H1 (cell line): ENCODE measurements at regions of chr2 and their contacts with region 1.

Region 1: GRCh38 chr2:201860636-201861066 is 54.3 kb downstream of the CDK15 start:
- DNase-seq: peak in 1 of 2 experiments; percentile 17
- H3K4me3 ChIP-seq: no peak overlapping the region
- H3K27ac ChIP-seq: no peak overlapping the region
- H3K4me1 ChIP-seq: peaks cover 3 to 27% (median 15%) of the 10 kb centered on the region in 4 experiments; a peak in 5 of 7 replicates
- H3K27me3 ChIP-seq: no peaks in the 10 kb centered on the region; a peak in 1 of 7 replicates
- CTCF ChIP-seq: peak; percentile 49 to 96 (median 83)
- EP300 ChIP-seq: no peak
- POLR2A ChIP-seq: no peak
- RAD21 ChIP-seq: peak; percentile 96 to 97

Region 2: DNA sequence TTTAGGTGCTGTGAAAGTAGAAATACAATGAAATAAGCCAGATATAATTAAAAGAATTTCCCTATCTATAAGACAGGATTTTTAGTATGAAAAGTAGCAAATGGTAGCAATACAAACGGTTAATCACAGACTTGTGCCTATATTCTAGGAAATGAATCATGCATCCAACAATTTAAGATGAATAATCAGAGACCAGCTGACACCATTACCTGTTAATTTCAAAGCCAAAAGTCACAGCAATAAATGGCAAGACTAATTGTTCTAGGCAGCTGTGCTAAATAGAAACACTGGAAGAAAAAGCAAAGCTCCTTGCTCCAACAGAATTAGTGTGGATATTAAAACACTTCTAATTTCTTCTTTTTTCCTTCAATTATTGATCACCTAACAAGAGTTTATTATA is 127.1 kb before region 1 on chr2:
- CTCF ChIA-PET with region 1: no interaction called
- POLR2A ChIA-PET with region 1: no interaction called
- DNase-seq: no peak
- H3K4me3 ChIP-seq: no peak overlapping the region
- H3K27ac ChIP-seq: no peak overlapping the region
- H3K4me1 ChIP-seq: no peaks in the 10 kb centered on the region
- H3K27me3 ChIP-seq: no peaks in the 10 kb centered on the region
- CTCF ChIP-seq: no peak
- EP300 ChIP-seq: no peak
- POLR2A ChIP-seq: no peak
- RAD21 ChIP-seq: no peak

Region 3: DNA sequence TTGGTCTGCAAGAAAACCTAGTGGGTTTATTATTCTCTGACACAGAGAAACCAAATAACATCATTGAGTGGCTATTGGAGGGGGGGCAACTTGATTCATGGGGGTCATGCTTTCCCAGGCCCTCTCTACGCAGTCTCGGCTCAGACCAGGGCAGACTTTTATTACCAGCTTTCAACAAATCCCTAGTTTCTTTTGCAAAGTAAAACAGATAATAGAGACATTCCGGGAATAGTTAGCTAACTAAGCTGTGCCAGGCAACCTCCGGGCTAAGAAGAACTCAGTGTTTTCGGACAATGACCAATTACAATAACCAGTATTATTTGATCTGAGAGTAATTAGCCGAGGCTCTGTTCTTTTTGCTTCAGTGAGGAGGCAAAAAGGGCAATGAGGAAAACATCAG is 11.9 kb after region 1 on chr2:
- CTCF ChIA-PET with region 1: interaction called, 19 read pairs
- POLR2A ChIA-PET with region 1: no interaction called
- DNase-seq: no peak
- H3K4me3 ChIP-seq: no peak overlapping the region
- H3K27ac ChIP-seq: no peak overlapping the region
- H3K4me1 ChIP-seq: peaks cover 0 to 5% (median 2%) of the 10 kb centered on the region in 4 experiments; a peak in 3 of 7 replicates
- H3K27me3 ChIP-seq: no peaks in the 10 kb centered on the region; a peak in 1 of 7 replicates
- CTCF ChIP-seq: no peak
- EP300 ChIP-seq: no peak
- POLR2A ChIP-seq: no peak
- RAD21 ChIP-seq: no peak

Region 4: GRCh38 chr2:201891676-201892075 is 31.0 kb after region 1 on chr2:
- CTCF ChIA-PET with region 1: interaction called, 21 read pairs
- POLR2A ChIA-PET with region 1: interaction called, 3 read pairs
- DNase-seq: no peak
- H3K4me3 ChIP-seq: no peak overlapping the region
- H3K27ac ChIP-seq: no peak overlapping the region
- H3K4me1 ChIP-seq: peaks cover 0 to 9% (median 5%) of the 10 kb centered on the region in 4 experiments; a peak in 2 of 7 replicates
- H3K27me3 ChIP-seq: no peaks in the 10 kb centered on the region
- CTCF ChIP-seq: no peak
- EP300 ChIP-seq: no peak
- POLR2A ChIP-seq: no peak
- RAD21 ChIP-seq: no peak

Region 5: DNA sequence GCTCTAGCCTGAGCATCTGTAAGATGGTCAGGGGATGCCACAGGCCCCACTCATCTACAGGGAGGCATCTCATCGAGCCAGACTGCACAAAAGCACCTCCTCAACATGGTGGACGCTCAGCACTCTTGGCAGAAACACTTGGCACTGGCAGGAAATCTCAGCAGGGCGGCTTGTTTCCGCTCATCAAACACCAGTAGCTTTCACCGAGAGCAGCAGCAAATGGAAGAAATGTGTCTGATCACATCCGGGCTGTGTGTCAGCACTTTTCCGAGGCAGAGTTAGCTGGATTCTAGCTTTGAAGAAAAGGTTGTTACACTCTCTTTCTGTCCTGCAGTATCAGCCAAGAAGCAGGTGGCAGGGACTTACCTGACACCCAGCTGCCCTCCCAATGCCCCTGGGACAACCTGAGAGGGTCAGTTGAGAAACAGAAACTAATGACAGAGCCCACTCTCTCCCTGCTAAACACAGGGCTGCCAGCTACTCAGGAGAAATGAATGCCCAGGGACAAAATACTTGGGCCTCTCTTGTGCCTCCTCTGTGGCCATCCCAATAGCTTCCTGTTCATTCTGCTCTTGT is 104.1 kb after region 1 on chr2:
- CTCF ChIA-PET with region 1: interaction called, 15 read pairs
- POLR2A ChIA-PET with region 1: no interaction called
- DNase-seq: no peak
- H3K4me3 ChIP-seq: no peak overlapping the region
- H3K27ac ChIP-seq: no peak overlapping the region
- H3K4me1 ChIP-seq: peaks cover 0 to 23% (median 18%) of the 10 kb centered on the region in 4 experiments; a peak in 6 of 7 replicates
- H3K27me3 ChIP-seq: no peaks in the 10 kb centered on the region
- CTCF ChIP-seq: no peak
- EP300 ChIP-seq: no peak
- POLR2A ChIP-seq: no peak
- RAD21 ChIP-seq: no peak

Region 6: GRCh38 chr2:201996006-201996405 is 135.4 kb after region 1 on chr2:
- CTCF ChIA-PET with region 1: interaction called, 11 read pairs
- POLR2A ChIA-PET with region 1: no interaction called
- DNase-seq: peak; percentile 79 to 94
- H3K4me3 ChIP-seq: peak overlapping the region in 1 of 4 experiments; percentile 26; a peak in 1 of 8 replicates
- H3K27ac ChIP-seq: peak overlapping the region; percentile 58
- H3K4me1 ChIP-seq: peaks cover 9 to 24% (median 22%) of the 10 kb centered on the region in 4 experiments
- H3K27me3 ChIP-seq: no peaks in the 10 kb centered on the region; a peak in 1 of 7 replicates
- CTCF ChIP-seq: no peak
- EP300 ChIP-seq: peak; percentile 52 to 95; a peak in 2 of 3 replicates
- POLR2A ChIP-seq: no peak
- RAD21 ChIP-seq: peak in 1 of 2 experiments; percentile 9; a peak in 1 of 4 replicates

Region 7: DNA sequence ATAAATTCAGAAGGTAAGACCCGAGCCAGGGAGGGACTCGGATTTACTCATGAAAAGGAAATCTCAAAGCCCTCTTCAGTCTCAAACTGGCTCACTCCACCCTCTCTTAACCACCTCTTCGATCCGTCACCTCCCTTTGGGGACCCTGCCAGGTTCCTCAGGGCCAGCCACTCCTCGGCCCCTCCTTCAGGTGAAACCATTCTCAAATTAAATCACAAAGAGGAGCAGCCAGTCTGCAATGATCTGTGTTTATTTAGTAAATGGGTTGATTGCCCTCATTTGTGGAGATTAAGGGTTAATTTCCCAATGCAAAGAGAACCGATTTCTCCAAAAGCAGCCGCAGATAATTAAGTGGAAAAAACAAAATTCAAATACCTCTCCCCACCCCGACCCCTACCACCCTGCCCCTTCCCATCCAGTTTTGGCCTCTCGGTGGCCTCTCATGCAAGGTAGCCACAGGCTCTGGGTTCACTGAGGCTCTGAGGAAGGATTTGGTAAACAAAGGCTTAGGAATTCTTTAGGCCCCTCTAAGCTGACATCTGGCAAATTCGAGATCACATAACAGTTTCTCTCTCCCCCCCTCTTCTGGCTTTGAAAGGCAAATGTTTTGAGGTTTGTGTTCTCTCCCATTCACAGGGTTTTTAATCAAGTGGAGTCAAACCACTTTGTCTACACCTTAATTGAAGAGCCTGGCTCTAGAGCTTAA is 162.7 kb after region 1 on chr2:
- CTCF ChIA-PET with region 1: interaction called, 13 read pairs
- POLR2A ChIA-PET with region 1: interaction called, 4 read pairs
- DNase-seq: peak; percentile 71 to 84
- H3K4me3 ChIP-seq: peak overlapping the region in 1 of 4 experiments; percentile 44; a peak in 2 of 8 replicates
- H3K27ac ChIP-seq: peak overlapping the region; percentile 66; the same call in 1 of the 2 replicates
- H3K4me1 ChIP-seq: peaks cover 13 to 28% (median 25%) of the 10 kb centered on the region in 4 experiments
- H3K27me3 ChIP-seq: peaks cover 0 to 3% (median 0%) of the 10 kb centered on the region in 4 experiments; a peak in 3 of 7 replicates
- CTCF ChIP-seq: peak in 2 of 3 experiments; percentile 2 to 16; a peak in 1 of 4 replicates
- EP300 ChIP-seq: peak in 1 of 2 experiments; percentile 64; a peak in 1 of 3 replicates
- POLR2A ChIP-seq: no peak
- RAD21 ChIP-seq: peak; percentile 9 to 35; a peak in 2 of 4 replicates

Region 8: DNA sequence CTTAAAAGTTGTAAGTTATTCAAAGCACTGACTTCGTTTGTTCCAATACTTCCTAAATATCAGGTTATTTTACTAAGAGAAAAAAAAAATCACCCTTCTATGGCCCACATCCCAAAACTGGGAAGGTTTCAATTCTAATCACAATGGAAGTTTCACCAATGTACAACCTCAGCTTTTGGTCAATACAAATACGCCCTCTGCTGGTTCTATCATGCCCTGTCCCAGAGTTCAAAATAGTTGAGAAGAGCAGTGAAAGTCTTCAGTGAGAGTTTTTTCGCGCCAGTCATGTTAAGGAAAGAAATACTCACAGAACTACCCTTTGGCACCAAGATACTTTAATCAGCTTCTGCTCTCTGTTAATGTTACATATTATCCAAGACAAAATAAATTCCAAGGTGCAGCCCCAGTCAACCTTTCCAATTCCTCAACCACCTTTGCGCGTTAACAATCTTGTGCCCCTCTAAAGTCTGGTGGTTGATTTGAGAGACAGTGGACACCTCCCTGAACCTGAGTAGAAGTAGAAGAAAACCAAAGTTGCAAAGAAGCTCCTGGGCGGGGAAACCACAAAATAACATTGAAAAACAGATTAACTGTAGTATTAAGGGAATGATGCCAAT is 317.8 kb after region 1 on chr2:
- CTCF ChIA-PET with region 1: interaction called, 26 read pairs
- POLR2A ChIA-PET with region 1: no interaction called
- DNase-seq: peak in 1 of 2 experiments; percentile 74
- H3K4me3 ChIP-seq: no peak overlapping the region
- H3K27ac ChIP-seq: no peak overlapping the region
- H3K4me1 ChIP-seq: no peaks in the 10 kb centered on the region
- H3K27me3 ChIP-seq: no peaks in the 10 kb centered on the region
- CTCF ChIP-seq: peak in 2 of 3 experiments; percentile 76 to 86; a peak in 3 of 4 replicates
- EP300 ChIP-seq: no peak
- POLR2A ChIP-seq: no peak
- RAD21 ChIP-seq: peak; percentile 97 to 98